Activated naive CD4-positive, alpha-beta T cell treated with anti-CD3 and anti-CD28 coated beads for 36 hours (primary cell): ENCODE measurements at regions of chr6 and their contacts with region 1.

Region 1: GRCh38 chr6:37691904-37692806 is 5.5 kb downstream of the MDGA1 start:
- DNase-seq: peak; percentile 87
- H3K4me3 Mint-ChIP-seq: no peak overlapping the region
- H3K27ac Mint-ChIP-seq: no peak overlapping the region
- H3K4me1 Mint-ChIP-seq: peaks cover 21% of the 10 kb centered on the region
- H3K27me3 Mint-ChIP-seq: peaks cover 12% of the 10 kb centered on the region

Region 2: DNA sequence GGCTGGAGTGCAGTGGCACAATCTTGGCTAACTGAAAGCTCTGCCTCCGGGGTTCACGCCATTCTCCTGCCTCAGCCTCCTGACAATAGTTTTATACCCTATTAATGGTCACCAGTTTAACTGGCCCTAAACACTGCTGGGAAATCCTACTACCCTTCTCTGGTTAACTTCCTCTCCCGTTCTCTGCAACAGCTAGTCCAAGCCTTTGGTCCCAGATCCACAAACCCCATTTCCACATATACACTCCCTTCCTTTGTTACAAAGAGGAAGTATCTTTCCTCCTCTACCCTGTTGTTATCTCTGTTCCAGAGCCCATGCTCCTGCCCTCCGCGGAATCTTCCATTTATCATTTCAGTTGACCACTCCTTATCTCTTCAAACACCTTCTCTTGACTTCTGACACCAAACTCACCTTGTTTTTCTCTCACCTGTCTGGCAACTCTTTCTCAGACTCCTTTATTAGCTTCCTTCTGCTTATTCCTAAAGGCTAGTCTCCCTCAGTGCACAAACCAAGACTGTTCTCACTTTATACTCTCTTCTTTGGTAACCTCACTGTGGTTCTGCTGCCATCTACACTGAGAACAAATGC is 459.6 kb before region 1 on chr6:
- CTCF ChIA-PET with region 1: no interaction called
- intact Hi-C with region 1: no loop called
- DNase-seq: no peak
- H3K4me3 Mint-ChIP-seq: no peak overlapping the region
- H3K27ac Mint-ChIP-seq: no peak overlapping the region
- H3K4me1 Mint-ChIP-seq: peaks cover 8% of the 10 kb centered on the region
- H3K27me3 Mint-ChIP-seq: no peaks in the 10 kb centered on the region

Region 3: GRCh38 chr6:37324131-37325033 is 367.8 kb before region 1 on chr6:
- CTCF ChIA-PET with region 1: interaction called, 18 read pairs
- intact Hi-C with region 1: loop called (anchors 1 kb)
- DNase-seq: peak; percentile 66
- H3K4me3 Mint-ChIP-seq: no peak overlapping the region
- H3K27ac Mint-ChIP-seq: no peak overlapping the region
- H3K4me1 Mint-ChIP-seq: peaks cover 20% of the 10 kb centered on the region
- H3K27me3 Mint-ChIP-seq: no peaks in the 10 kb centered on the region

Region 4: GRCh38 chr6:37483917-37484785 is 208.0 kb before region 1 on chr6:
- CTCF ChIA-PET with region 1: interaction called, 7 read pairs
- intact Hi-C with region 1: loop called (anchors 1 kb)
- DNase-seq: peak; percentile 79
- H3K4me3 Mint-ChIP-seq: no peak overlapping the region
- H3K27ac Mint-ChIP-seq: no peak overlapping the region
- H3K4me1 Mint-ChIP-seq: peaks cover 14% of the 10 kb centered on the region
- H3K27me3 Mint-ChIP-seq: no peaks in the 10 kb centered on the region

Region 5: GRCh38 chr6:37624986-37625574 is 67.1 kb before region 1 on chr6:
- CTCF ChIA-PET with region 1: no interaction called
- intact Hi-C with region 1: loop called (anchors 5 kb)
- DNase-seq: no peak
- H3K4me3 Mint-ChIP-seq: peak overlapping the region; percentile 44
- H3K27ac Mint-ChIP-seq: no peak overlapping the region
- H3K4me1 Mint-ChIP-seq: peaks cover 35% of the 10 kb centered on the region
- H3K27me3 Mint-ChIP-seq: peaks cover 6% of the 10 kb centered on the region

Region 6: DNA sequence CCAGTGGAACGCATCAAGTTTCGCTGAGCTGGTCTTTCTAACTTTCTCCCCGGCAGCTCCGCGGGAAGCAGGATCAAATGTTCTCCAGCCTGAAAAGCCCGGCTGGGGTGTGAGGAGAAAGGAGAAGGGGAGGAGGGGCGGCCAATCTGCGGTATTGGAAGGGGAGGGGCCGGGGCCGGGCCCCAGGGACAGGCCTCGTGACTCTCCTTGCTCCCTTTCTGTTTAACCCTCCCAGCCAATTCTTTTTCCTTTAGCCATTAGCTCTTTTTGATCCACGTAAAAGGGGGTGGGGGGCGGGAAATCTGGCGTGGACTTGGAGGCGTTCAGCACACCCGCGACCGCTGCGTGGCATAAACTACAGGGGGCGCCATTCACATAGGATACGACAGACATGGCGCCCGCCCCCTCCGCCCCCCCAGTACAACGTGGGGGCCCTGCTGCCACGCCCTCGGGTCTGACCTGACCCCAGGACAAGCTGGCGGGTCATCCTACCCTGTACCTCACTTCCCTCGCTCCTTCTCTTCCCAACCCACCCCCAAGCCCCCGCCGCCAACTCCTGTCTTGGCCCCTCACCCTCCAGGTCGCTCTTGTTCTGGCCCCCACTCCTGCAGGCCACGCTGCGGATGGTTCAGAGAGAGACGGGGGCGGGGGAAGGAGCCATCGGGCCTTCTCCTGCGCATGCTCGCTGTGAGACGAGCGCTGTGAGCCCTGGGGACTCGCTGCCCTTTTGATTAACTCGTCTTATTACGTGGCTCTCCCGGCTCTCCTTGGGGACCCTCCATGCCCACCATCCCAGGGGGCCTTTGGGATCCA is 13.3 kb after region 1 on chr6:
- CTCF ChIA-PET with region 1: interaction called, 32 read pairs
- intact Hi-C with region 1: no loop called
- DNase-seq: peak; percentile 71
- H3K4me3 Mint-ChIP-seq: peak overlapping the region; percentile 65
- H3K27ac Mint-ChIP-seq: peak overlapping the region; percentile 57
- H3K4me1 Mint-ChIP-seq: peaks cover 9% of the 10 kb centered on the region
- H3K27me3 Mint-ChIP-seq: no peaks in the 10 kb centered on the region

Region 7: GRCh38 chr6:37742401-37742760 is 50.2 kb after region 1 on chr6:
- CTCF ChIA-PET with region 1: no interaction called
- intact Hi-C with region 1: no loop called
- DNase-seq: no peak
- H3K4me3 Mint-ChIP-seq: no peak overlapping the region
- H3K27ac Mint-ChIP-seq: no peak overlapping the region
- H3K4me1 Mint-ChIP-seq: no peaks in the 10 kb centered on the region
- H3K27me3 Mint-ChIP-seq: peaks cover 9% of the 10 kb centered on the region

Region 8: GRCh38 chr6:38095054-38095453 is 402.9 kb after region 1 on chr6:
- CTCF ChIA-PET with region 1: no interaction called
- intact Hi-C with region 1: no loop called
- DNase-seq: no peak
- H3K4me3 Mint-ChIP-seq: no peak overlapping the region
- H3K27ac Mint-ChIP-seq: no peak overlapping the region
- H3K4me1 Mint-ChIP-seq: peaks cover 16% of the 10 kb centered on the region
- H3K27me3 Mint-ChIP-seq: no peaks in the 10 kb centered on the region